ENCODE measurements at regions of chr7 and their contacts with region 1.

Region 1: DNA sequence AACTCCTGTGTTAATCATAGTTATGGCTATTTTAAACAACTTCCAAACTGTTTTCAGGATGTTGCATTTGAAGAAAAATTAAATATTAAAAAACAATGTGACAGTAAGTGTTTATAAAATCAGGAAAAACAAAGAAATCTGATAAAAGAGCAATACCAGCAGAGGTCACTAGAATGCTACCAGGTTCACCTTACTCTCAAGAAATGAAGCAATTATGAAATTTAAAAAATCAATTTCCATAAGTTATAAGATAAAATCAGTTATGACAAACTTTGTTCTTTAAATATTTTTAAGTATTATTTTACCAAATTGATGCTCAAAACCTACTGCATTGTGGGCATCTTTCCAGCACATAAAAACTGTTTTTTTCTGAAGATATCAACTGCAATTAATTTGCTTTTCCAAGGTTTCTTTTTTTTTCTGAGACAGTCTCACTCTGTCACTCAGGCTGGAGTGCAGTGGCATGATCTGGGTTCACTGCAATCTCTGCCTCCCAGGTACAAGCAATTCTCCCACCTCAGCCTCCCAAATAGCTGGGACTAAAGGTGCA is 50.7 kb upstream of the RHEB start:
- DNase-seq: no peak
- H3K4me3 ChIP-seq: no peak overlapping the region
- H3K27ac ChIP-seq: no peak overlapping the region
- H3K4me1 ChIP-seq: peaks cover 10% of the 10 kb centered on the region
- H3K27me3 ChIP-seq: no peaks in the 10 kb centered on the region
- CTCF ChIP-seq: peak; percentile 41 to 47

Region 2: DNA sequence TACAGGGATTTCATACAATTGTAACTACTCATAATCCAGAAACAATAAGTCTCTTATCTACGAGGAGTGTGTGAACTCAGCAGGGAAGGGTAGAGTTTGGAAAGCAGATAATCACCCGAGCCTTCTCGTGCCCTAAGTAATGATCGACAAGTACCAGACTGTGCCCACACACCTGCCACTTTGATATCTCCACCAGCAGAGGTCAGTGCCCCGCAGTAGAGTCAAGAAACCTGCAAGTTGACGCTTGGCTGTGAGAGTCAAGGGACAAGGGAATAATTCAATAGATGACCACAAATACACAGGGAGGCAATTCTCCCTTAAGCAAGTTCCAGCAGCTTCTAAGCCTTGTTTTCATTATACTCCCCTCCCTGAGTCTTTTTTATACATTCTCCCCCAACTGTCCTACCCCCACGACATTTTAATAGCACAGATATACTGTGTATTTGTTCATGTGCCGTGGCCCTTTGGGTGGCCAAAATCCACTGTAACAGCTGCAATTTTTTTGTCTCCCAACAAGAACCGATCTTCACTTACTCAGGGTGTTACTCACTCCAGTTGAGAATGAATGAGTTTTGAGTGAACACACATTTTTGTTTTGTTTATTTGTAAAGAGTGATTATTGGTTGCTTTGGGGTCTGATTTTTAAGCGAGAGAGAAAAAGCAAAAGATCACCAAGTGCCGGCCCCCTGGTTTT is 56.1 kb after region 1 on chr7:
- CTCF ChIA-PET with region 1: no interaction called
- dilution Hi-C with region 1: no loop called
- in situ Hi-C with region 1: no loop called
- intact Hi-C with region 1: loop called (anchors 2 kb)
- DNase-seq: peak; percentile 48
- H3K4me3 ChIP-seq: no peak overlapping the region
- H3K27ac ChIP-seq: no peak overlapping the region
- H3K4me1 ChIP-seq: peaks cover 35% of the 10 kb centered on the region
- H3K27me3 ChIP-seq: no peaks in the 10 kb centered on the region
- CTCF ChIP-seq: peak; percentile 50 to 87

Region 3: GRCh38 chr7:151705636-151706276 is 135.3 kb after region 1 on chr7:
- CTCF ChIA-PET with region 1: no interaction called
- dilution Hi-C with region 1: no loop called
- in situ Hi-C with region 1: no loop called
- intact Hi-C with region 1: loop called (anchors 1 kb)
- DNase-seq: peak; percentile 22
- H3K4me3 ChIP-seq: no peak overlapping the region
- H3K27ac ChIP-seq: no peak overlapping the region
- H3K4me1 ChIP-seq: peaks cover 18% of the 10 kb centered on the region
- H3K27me3 ChIP-seq: no peaks in the 10 kb centered on the region
- CTCF ChIP-seq: peak; percentile 30 to 67

Region 4: DNA sequence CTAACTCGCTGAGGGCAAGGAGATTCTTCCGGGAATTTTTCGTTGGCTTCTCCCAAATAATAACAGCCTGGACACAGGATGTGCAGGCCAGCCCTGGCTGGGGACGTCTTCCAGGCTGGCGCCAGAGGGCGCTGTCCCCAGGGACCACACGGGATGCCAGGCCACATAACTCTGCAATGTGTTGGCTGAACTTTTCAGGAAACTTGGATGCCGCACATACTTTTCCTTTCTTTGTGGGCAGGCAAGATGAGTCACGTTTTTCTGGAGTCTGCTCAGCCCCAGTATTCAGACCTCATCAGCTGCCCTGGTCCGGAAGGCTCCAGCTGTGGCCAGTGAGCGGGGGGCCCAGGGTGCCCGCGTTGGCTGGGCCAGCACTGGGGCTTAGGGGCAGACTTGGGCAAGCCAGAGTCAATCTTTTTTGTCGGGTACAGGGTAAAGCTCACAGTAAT is 183.7 kb after region 1 on chr7:
- CTCF ChIA-PET with region 1: no interaction called
- dilution Hi-C with region 1: no loop called
- in situ Hi-C with region 1: no loop called
- intact Hi-C with region 1: loop called (anchors 1 kb)
- DNase-seq: peak; percentile 94
- H3K4me3 ChIP-seq: no peak overlapping the region
- H3K27ac ChIP-seq: peak overlapping the region; percentile 31
- H3K4me1 ChIP-seq: peaks cover 27% of the 10 kb centered on the region
- H3K27me3 ChIP-seq: no peaks in the 10 kb centered on the region
- CTCF ChIP-seq: peak; percentile 98 to 99

Region 5: DNA sequence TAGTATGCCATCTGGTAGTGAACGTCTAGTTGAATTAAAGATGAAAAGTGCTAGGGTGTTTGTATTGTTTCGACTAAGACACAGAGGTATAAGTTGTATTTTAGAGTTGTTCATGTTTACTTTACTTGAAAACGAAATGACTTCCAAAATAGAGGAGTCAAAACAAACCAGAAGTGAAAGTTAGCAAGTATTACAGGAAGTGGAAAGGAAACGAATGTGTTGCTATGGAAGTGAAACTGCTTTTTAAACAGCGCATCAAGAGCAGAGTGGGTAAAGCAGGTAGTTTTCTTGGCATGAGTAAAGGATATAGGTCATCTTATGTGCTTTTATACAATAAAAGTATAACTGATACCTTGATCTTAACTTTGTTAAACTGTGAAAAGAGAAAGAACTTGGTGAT is 365.8 kb after region 1 on chr7:
- CTCF ChIA-PET with region 1: no interaction called
- dilution Hi-C with region 1: no loop called
- in situ Hi-C with region 1: no loop called
- intact Hi-C with region 1: loop called (anchors 10 kb)
- DNase-seq: no peak
- H3K4me3 ChIP-seq: no peak overlapping the region
- H3K27ac ChIP-seq: no peak overlapping the region
- H3K4me1 ChIP-seq: peaks cover 16% of the 10 kb centered on the region
- H3K27me3 ChIP-seq: no peaks in the 10 kb centered on the region
- CTCF ChIP-seq: no peak

Region 6: GRCh38 chr7:152025077-152025936 is 454.9 kb after region 1 on chr7 and contains the start of gene GALNT11:
- CTCF ChIA-PET with region 1: no interaction called
- dilution Hi-C with region 1: no loop called
- in situ Hi-C with region 1: no loop called
- intact Hi-C with region 1: no loop called
- DNase-seq: peak; percentile 79
- H3K4me3 ChIP-seq: peak within 1 kb of the TSS; percentile 80 to 89 (median 84)
- H3K27ac ChIP-seq: peak within 1 kb of the TSS; percentile 75
- H3K4me1 ChIP-seq: peaks cover 5% of the 10 kb centered on the region
- H3K27me3 ChIP-seq: no peaks in the 10 kb centered on the region
- CTCF ChIP-seq: peak in 1 of 2 donors; percentile 41
- total RNA-seq, gene GALNT11: 28.4 to 49.2 TPM